ENCODE measurements at regions of chr5 and their contacts with region 1.

Region 1: GRCh38 chr5:106720367-106720766 is 950.4 kb downstream of the EFNA5 start:
- DNase-seq: no peak
- ATAC-seq: no peak
- H3K4me3 ChIP-seq: no peak overlapping the region
- H3K27ac ChIP-seq: no peak overlapping the region
- H3K4me1 ChIP-seq: no peaks in the 10 kb centered on the region
- H3K27me3 ChIP-seq: no peaks in the 10 kb centered on the region
- CTCF ChIP-seq: no peak
- POLR2A ChIP-seq: no peak
- RAD21 ChIP-seq: no peak

Region 2: GRCh38 chr5:107425541-107426256 is 705.3 kb after region 1 on chr5:
- CTCF ChIA-PET with region 1: no interaction called
- POLR2A ChIA-PET with region 1: interaction called, 10 read pairs
- dilution Hi-C with region 1: no loop called
- in situ Hi-C with region 1: no loop called
- intact Hi-C with region 1: no loop called
- DNase-seq: peak; percentile 80
- ATAC-seq: peak; percentile 83
- H3K4me3 ChIP-seq: no peak overlapping the region
- H3K27ac ChIP-seq: no peak overlapping the region
- H3K4me1 ChIP-seq: peaks cover 13% of the 10 kb centered on the region
- H3K27me3 ChIP-seq: no peaks in the 10 kb centered on the region
- CTCF ChIP-seq: no peak
- POLR2A ChIP-seq: no peak
- RAD21 ChIP-seq: no peak